GM10248 (cell line): ENCODE measurements at regions of chr6 and their contacts with region 1.

Region 1: DNA sequence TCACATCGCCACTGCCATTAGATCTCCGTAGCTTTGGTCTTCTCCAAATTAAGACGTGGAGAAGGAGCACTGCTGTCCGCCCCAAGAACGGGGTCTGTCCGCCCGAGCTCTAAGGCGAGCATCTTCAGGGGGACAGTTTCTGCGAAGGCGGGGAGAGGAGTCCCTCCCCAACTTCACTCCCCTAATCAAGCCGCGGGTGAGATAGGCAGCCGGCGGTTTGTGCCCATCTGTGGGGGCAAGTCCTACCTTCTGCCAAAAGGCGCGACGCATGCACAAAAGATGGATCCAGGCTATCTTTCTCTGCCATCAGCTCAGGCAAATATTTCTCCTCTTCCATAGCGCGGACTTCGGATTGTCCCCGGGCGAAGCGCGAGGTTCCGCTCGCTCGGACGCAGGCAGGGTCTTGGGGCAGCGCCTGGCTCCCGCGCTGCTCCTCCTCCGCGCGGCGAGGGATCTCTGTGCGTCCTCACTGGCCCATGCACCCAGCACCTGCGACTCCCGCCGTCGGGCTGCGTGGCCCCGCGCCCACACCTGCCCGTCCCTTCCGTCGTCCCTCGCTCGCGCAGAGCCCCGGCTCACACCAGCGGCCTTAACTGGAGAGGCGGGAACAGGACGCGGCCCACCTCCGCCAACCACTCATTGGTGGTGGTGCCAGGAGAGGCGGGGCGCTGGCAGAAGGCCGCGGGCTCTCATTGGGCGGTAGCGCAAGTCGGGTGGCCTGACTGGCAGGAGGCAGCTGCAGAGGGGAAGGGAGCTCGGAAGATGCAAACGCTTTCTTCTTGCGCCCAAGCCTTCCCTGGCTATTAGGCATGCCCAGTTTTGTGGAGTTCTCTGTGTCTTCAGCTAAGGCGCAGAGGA is at the start of gene KHDRBS2:
- DNase-seq: peak; percentile 87
- CTCF ChIP-seq: no peak

Region 2: GRCh38 chr6:62265906-62266525 is 19.8 kb before region 1 on chr6:
- CTCF ChIA-PET with region 1: interaction called, 17 read pairs
- POLR2A ChIA-PET with region 1: no interaction called
- DNase-seq: no peak
- CTCF ChIP-seq: no peak

Region 3: DNA sequence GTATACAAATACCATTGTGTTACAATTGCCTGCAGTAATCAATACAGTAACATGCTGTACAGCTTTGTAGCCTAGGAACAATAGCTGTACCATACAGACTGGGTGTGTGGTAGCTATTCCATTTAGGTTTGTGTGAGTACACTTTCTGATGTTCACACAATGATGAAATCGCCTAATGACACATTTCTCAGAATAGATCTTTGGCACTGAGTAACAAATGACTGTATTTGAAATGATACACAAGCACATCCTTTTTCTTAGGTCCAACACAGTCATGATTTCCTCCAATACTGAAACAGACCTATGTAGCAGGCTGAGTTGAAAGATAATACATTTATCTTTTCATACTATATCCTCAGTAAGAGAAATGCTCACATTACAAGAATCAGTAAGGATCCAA is 13.7 kb before region 1 on chr6:
- CTCF ChIA-PET with region 1: interaction called, 17 read pairs
- POLR2A ChIA-PET with region 1: no interaction called
- DNase-seq: no peak
- CTCF ChIP-seq: no peak